ENCODE measurements at regions of chr3 and their contacts with region 1.

Region 1: GRCh38 chr3:190941694-190942260 is 79.3 kb upstream of the GMNC start:
- DNase-seq: no peak
- ATAC-seq: no peak

Region 2: DNA sequence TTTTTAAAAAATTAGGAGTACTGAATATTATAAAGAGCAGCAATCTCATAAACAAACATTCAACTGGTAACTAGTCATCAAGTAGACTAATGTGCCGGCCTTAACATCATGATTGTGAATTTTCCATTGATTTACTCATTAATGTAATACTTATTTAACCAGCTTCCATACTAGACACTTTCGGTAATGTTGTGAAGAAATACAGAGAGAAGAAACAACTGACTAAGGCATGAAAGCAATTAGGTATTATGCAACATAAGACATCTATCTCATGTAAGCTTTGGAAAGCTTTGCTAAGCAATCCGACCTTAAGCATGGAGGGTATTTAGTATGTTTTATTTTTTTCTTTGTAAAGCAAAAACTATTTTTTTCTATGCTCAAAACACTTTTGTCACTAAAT is 319.9 kb before region 1 on chr3:
- intact Hi-C with region 1: loop called (anchors 5 kb)
- DNase-seq: no peak
- ATAC-seq: no peak

Region 3: GRCh38 chr3:191176038-191176785 is 234.4 kb after region 1 on chr3:
- intact Hi-C with region 1: no loop called
- DNase-seq: no peak
- ATAC-seq: no peak

Measured in left ventricle myocardium superior (tissue), 1 donor.